ENCODE measurements at regions of chr9 and their contacts with region 1.

Region 1: GRCh38 chr9:4366591-4367330 is 66.9 kb upstream of the GLIS3 start:
- DNase-seq: peak in 1 of 2 experiments; percentile 43
- H3K4me3 ChIP-seq: no peak overlapping the region
- H3K27ac ChIP-seq: no peak overlapping the region
- H3K4me1 ChIP-seq: no peaks in the 10 kb centered on the region
- H3K27me3 ChIP-seq: no peaks in the 10 kb centered on the region
- CTCF ChIP-seq: peak; percentile 79

Region 2: GRCh38 chr9:2872257-2872935 is 1494.4 kb before region 1 on chr9:
- CTCF ChIA-PET with region 1: no interaction called
- POLR2A ChIA-PET with region 1: no interaction called
- intact Hi-C with region 1: loop called (anchors 5 kb)
- DNase-seq: no peak
- H3K4me3 ChIP-seq: no peak overlapping the region
- H3K27ac ChIP-seq: no peak overlapping the region
- H3K4me1 ChIP-seq: no peaks in the 10 kb centered on the region
- H3K27me3 ChIP-seq: peaks cover 57% of the 10 kb centered on the region
- CTCF ChIP-seq: 0 out of 2 replicates have a peak, but pooled peaks have one; percentile 20

Region 3: GRCh38 chr9:3240656-3241268 is 1126.0 kb before region 1 on chr9:
- CTCF ChIA-PET with region 1: no interaction called
- POLR2A ChIA-PET with region 1: no interaction called
- intact Hi-C with region 1: loop called (anchors 2 kb)
- DNase-seq: peak in 1 of 2 experiments; percentile 38
- H3K4me3 ChIP-seq: no peak overlapping the region
- H3K27ac ChIP-seq: no peak overlapping the region
- H3K4me1 ChIP-seq: no peaks in the 10 kb centered on the region
- H3K27me3 ChIP-seq: no peaks in the 10 kb centered on the region
- CTCF ChIP-seq: peak; percentile 71

Region 4: DNA sequence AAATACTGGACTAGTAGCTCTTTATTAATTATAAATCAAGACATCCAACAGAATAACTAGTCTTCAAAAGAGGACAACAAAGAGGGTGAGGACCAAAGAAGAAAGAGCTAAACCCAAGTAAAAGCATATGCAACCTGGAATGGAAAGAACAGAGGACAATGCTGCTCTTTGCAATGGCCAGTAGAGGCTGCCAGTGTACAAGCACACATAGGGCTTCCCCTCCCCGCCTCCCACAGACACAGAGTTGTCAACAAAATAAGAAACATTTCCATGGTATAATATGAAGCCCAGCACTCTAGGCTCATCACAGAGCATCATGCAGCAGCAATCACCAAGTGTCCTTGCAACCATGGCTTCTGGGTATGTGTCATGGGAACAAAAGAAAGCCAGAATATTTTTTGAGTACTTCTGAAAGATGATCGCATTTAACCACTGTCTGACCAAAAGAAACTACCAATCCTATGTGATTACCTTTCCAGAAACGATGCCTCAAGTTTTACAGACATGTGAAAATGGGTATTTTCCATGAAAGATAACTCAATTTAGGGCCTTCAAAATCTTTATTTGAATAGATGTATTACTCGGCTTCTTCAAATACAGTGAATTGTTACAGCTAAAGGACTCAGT is 899.1 kb before region 1 on chr9:
- CTCF ChIA-PET with region 1: no interaction called
- POLR2A ChIA-PET with region 1: no interaction called
- intact Hi-C with region 1: loop called (anchors 2 kb)
- DNase-seq: peak in 1 of 2 experiments; percentile 19
- H3K4me3 ChIP-seq: no peak overlapping the region
- H3K27ac ChIP-seq: no peak overlapping the region
- H3K4me1 ChIP-seq: no peaks in the 10 kb centered on the region
- H3K27me3 ChIP-seq: no peaks in the 10 kb centered on the region
- CTCF ChIP-seq: peak; percentile 63

Region 5: DNA sequence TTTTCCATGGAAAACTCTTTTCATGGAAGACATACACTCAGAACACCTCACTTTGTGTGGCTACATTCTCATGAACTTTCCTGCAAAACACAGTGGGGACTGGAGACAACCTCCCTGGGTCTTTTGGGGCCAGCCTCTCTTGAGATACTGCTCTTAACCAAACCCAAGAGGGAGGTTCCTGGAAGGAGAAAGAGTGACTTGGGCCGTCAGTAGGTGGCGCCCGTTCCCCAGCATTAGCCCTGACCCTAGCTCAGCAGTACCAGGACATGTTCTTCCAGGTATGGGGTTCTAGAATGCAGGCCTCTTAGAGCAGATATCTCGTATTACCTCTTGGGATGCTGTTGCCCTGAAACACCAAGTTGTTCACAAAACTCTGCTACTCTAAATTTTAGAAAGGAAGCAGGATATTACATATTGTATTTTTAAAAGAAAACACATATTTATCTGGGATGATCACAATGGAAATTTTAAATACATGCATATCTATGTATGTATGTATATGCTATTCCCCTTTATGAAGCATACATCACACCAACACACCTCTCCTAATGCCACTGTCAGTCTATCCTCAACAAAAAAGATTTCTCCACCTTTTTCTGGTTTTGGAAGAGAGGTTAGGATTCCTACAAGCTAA is 51.1 kb before region 1 on chr9:
- CTCF ChIA-PET with region 1: interaction called, 16 read pairs
- POLR2A ChIA-PET with region 1: no interaction called
- intact Hi-C with region 1: loop called (anchors 1 kb)
- DNase-seq: peak in 1 of 2 experiments; percentile 64
- H3K4me3 ChIP-seq: no peak overlapping the region
- H3K27ac ChIP-seq: no peak overlapping the region
- H3K4me1 ChIP-seq: no peaks in the 10 kb centered on the region
- H3K27me3 ChIP-seq: no peaks in the 10 kb centered on the region
- CTCF ChIP-seq: peak; percentile 82

Region 6: DNA sequence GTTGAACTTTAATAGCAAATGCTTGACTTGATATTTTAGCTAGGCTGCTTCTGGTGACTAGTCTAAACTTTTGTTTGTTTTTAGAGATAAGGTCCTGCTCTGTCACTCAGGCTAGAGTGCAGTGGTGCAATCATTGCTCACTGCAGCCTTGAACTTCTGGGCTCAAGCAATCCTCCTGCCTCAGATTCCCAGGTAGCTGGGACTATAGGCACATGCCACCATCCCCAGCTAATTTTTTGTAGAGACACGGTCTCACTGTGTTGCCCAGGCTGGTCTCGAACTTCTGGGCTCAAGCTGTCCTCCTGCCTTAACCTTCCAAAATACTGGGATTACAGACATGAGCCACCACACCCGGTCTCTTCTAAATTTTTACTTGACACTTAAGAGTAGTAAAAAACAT is 333.3 kb after region 1 on chr9:
- CTCF ChIA-PET with region 1: no interaction called
- POLR2A ChIA-PET with region 1: no interaction called
- intact Hi-C with region 1: no loop called
- DNase-seq: no peak
- H3K4me3 ChIP-seq: no peak overlapping the region
- H3K27ac ChIP-seq: no peak overlapping the region
- H3K4me1 ChIP-seq: no peaks in the 10 kb centered on the region
- H3K27me3 ChIP-seq: no peaks in the 10 kb centered on the region
- CTCF ChIP-seq: no peak

Measured in PC-9 (cell line).